Activated CD4-positive, alpha-beta T cell treated with anti-CD3 and anti-CD28 coated beads, Interleukin-2, amount 10 ng/mL, durations not matched to agents 24 days and 14 days (primary cell): ENCODE measurements at regions of chr1 and their contacts with region 1.

Region 1: GRCh38 chr1:58652651-58653184 is 47.1 kb downstream of the MYSM1 start:
- DNase-seq: peak; percentile 88
- H3K4me3 Mint-ChIP-seq: no peak overlapping the region
- H3K27ac Mint-ChIP-seq: no peak overlapping the region
- H3K4me1 Mint-ChIP-seq: peaks cover 13% of the 10 kb centered on the region
- H3K27me3 Mint-ChIP-seq: no peaks in the 10 kb centered on the region

Region 2: DNA sequence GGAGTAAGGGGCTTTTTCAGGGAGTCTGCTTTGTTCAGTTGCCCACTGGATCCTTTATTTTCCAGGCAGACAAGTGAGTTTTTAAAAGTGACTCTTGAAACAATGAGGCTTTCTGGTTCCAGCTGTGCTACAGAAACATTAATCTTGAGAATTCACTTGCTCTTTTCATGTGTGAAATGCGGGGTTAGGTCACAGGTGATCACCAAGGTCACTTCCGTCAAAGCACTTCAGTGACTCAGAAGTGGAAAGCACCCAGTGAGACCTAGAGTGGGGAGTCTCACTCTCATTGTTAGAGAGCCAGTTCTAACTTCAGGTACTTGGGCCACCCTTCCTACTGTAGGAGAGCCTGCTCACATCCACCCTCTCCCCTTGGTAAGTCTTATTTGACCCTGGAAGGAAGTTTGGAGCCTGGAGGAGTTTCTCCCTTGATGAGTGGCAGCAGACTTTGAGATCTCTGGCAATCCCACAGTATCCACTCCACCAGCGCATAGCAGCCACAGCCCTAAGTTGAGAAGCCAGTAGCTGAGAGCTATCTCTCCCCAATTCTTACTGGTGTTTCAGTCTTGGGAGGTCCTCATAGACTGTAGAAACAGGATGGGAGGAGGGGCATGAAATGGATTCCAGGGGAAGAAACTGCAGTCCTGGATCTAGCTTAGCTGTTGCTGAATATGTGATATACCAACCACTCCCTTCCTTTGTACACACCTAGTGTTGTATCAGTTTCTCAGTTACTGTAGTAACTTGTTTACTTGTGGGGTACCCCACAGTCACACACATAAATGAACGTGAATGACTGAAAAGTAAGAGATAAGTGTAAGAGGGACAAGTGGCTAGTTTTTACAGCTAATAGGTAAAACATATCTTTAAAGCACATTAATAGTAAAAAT is 78.8 kb before region 1 on chr1:
- intact Hi-C with region 1: loop called (anchors 5 kb)
- DNase-seq: peak; percentile 87
- H3K4me3 Mint-ChIP-seq: peak overlapping the region; percentile 49
- H3K27ac Mint-ChIP-seq: peak overlapping the region; percentile 52
- H3K4me1 Mint-ChIP-seq: peaks cover 35% of the 10 kb centered on the region
- H3K27me3 Mint-ChIP-seq: peaks cover 75% of the 10 kb centered on the region

Region 3: DNA sequence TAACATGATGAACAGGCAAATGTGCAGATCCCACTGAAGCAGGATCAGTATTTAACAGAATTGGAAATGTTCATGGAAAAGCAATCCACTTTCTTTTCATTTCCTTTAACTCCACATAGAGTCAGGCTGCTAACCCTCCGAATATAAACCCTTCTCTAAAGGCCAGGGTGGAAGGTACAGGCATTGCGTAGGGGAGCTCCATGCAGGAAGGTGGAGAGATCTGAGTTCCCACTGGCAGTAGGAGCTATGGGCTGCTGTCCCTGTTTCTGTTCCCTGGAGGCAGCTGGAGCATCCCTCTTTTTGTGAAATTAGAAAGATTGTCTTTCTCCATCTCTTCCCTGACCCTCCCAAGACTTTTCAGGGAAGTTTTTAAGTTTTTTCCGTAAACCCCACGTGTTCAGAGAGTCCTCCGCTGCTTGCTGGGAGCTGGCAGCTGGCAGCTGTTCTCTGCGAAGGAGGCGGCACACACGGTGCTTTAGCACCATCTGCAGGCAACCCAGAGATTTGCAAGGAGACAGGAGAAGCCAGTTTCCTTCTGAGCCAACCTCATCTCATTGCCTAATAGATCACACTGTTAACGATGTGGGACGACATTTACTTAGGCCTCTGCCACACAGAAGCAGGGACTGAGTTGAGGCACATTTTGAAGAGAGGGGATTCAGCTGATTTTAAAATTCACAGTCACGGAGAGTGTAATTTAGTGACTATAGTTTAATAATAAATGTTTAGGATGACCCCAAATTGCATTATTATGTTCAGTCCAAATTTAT is 1106.6 kb after region 1 on chr1:
- intact Hi-C with region 1: loop called (anchors 2 kb)
- DNase-seq: peak; percentile 92
- H3K4me3 Mint-ChIP-seq: peak overlapping the region; percentile 40
- H3K27ac Mint-ChIP-seq: no peak overlapping the region
- H3K4me1 Mint-ChIP-seq: peaks cover 4% of the 10 kb centered on the region
- H3K27me3 Mint-ChIP-seq: no peaks in the 10 kb centered on the region